Colonic mucosa (tissue), 4 donors: ENCODE measurements at regions of chr4 and their contacts with region 1.

Region 1: DNA sequence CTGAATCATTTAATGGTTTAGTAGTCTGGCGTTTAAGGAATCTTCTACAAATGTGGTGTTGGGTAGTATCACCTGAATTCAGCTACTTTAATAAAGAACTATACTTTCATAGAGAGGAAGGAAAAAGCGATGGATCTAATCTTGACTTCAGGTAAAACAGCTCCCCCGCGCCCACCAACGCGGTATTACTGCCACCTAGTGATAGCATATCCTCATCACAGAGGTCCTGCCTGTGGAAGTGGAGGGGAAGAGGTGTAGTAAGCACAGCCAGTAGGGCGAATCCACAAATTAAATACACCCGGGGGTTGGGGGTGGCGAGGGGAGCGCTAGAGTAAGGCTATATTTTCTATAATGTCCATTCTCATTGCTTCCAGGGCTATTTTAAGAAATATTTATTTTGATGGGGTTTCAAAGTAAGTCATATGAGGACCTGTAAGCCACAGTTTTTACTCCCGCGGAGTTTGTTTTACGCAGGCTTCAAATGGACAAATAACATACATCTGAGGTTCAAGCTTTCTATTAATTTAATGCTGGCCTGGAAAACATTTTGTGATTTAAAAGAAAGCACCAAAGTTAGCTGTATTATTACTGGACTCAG is 8.3 kb upstream of the DAPP1 start:
- DNase-seq: peak; percentile 69
- H3K4me3 ChIP-seq: no peak overlapping the region
- H3K27ac ChIP-seq: no peak overlapping the region
- H3K4me1 ChIP-seq: no peaks in the 10 kb centered on the region
- H3K27me3 ChIP-seq: no peaks in the 10 kb centered on the region
- CTCF ChIP-seq: peak; percentile 63

Region 2: DNA sequence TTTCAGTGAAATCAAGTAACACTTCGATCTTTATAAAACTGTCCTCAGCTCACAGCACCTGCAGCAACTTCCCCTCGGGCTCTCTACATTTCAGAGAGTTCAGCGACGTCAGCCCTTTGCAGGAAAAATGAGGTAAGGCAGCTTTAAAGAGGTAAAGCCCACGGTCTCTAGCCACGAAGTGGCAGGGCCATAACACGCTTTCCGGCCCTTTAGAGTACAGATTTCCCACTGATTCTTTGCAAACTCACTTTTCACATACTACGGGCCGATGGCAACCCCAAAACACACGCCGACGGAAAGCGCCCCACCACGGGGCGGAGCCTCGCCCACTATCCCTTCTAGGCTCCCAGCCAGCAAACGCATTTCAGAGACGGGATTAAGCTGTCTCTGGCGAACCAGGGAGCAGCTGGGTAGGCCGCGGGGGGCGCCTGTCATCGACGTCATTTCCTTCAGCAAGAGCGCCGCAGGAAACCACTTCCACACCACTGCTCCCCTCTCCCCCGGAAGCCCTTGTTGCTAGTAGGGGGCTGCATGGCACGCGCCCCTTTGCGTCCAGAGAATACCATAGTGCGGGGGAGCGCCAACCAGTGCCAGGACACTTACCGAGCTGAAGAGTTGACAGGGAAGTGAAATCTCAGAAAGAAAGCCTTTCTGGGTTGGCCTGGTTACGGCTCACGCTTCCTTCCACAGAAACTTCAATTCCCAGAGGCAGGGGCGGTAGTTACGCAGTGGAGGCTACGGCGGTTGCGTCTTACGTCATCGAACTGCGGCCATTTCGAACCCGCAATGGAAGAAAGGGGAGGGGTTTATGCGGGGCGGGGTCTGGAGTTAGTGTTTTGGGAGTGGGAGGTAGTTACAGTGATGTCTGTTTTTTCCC is 244.8 kb before region 1 on chr4 and contains the start of gene TRMT10A:
- intact Hi-C with region 1: loop called (anchors 2 kb)
- DNase-seq: peak; percentile 98
- H3K4me3 ChIP-seq: peak within 1 kb of the TSS; percentile 41
- H3K27ac ChIP-seq: peak within 1 kb of the TSS; percentile 89
- H3K4me1 ChIP-seq: no peaks in the 10 kb centered on the region
- H3K27me3 ChIP-seq: no peaks in the 10 kb centered on the region
- CTCF ChIP-seq: no peak
- total RNA-seq, gene TRMT10A: 6.8 to 10.6 TPM

Region 3: GRCh38 chr4:99885063-99885664 is 76.8 kb after region 1 on chr4:
- intact Hi-C with region 1: loop called (anchors 5 kb)
- DNase-seq: no peak
- H3K4me3 ChIP-seq: no peak overlapping the region
- H3K27ac ChIP-seq: no peak overlapping the region
- H3K4me1 ChIP-seq: no peaks in the 10 kb centered on the region
- H3K27me3 ChIP-seq: no peaks in the 10 kb centered on the region
- CTCF ChIP-seq: peak; percentile 25

Region 4: DNA sequence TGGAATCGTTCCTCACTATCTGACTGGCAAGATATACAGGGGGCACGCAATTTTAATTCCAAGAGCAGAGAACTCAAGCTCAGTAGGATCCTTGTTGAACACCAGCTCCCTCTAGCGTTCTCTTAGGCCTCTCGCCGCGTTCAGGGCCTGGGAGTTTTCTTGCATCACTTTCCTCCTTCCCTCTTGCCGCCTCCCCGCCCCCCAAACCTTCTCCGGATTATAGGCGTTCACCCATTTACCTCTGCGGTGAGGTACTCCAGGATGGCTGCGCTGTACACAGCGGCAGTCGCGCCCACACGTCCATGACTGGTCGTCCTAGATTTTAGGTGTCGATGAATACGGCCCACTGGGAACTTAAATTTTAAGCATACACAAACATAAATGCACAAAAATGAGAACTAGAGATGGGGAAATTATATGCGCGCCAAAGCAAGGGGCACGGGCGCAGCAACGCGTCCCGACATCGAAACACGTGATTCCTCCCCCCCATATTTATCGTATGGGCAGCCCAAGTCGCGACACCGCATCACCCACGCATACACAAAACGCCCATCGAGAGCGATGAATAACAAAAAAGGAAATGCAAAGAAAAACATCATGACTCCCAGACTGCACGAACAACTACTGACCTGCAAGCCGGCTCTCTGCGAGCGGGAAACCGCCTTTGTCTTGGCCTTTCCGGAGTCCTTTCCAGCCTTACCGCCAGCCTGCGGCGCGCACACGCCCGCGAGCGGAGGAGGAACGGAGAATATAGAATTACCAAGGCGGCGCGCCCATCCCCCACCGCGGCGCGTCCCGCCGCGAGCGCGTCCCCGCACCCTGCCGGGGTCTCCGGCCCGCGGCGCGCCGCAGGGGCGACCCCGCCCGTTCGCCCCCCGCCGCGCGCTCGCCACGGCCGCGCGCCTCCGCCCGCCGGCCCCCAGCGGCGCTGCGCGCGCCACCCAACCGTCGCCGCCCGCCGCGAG is 141.0 kb after region 1 on chr4:
- intact Hi-C with region 1: loop called (anchors 5 kb)
- DNase-seq: peak; percentile 97
- H3K4me3 ChIP-seq: peak overlapping the region; percentile 69
- H3K27ac ChIP-seq: peak overlapping the region; percentile 94
- H3K4me1 ChIP-seq: peaks cover 14% of the 10 kb centered on the region
- H3K27me3 ChIP-seq: no peaks in the 10 kb centered on the region
- CTCF ChIP-seq: peak; percentile 74

Region 5: GRCh38 chr4:99968330-99968729 is 160.0 kb after region 1 on chr4:
- intact Hi-C with region 1: no loop called
- DNase-seq: no peak
- H3K4me3 ChIP-seq: no peak overlapping the region
- H3K27ac ChIP-seq: no peak overlapping the region
- H3K4me1 ChIP-seq: no peaks in the 10 kb centered on the region
- H3K27me3 ChIP-seq: no peaks in the 10 kb centered on the region
- CTCF ChIP-seq: no peak